ENCODE measurements at regions of chr2 and their contacts with region 1.

Region 1: DNA sequence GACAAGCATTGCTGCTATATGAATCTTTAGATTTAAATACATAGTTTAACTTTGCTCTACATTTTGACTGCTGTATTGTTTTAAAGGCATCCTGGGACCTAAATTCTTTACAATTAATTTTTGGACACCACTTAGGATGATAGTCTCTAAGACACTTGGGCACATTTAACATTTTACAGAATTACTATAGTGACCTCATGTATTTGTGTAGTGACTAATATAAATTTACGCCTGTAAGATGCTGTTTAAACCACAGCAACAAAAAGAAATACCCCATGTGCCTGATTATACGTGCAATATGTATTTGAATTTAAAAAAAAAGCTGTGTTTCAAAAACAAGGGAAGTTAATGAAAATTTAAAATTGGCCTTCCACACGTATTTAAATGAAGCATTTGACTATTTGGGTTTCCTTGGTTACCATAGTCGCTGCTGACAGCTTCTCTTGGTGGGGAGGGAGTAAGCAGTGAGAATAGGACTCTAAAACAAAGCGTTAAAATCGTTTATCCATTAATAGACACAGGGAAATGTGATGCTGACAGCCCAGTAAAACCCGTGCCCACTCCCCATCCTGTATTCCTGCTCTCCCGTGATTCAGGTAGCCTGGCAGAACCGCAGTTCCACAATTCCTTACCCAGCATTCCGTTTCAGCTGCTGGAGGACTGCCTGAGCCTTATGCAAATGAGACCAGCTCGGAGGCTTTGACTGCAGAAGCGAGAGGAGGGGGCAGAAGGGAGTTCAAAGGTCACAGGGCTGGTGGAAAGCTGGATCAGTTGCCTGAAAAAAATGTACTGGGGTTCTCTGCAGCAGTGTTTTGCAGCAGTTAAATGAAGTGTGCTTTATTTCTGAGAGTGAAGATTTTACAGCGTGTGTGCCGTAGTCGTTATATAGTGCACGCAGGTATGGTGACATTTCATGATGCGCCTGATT is 104.3 kb downstream of the CSRNP3 start:
- DNase-seq: peak; percentile 53 to 93 (median 64)

Region 2: GRCh38 chr2:165469417-165469816 is 104.4 kb before region 1 on chr2 and contains the start of gene CSRNP3:
- intact Hi-C with region 1: loop called (anchors 5 kb)
- DNase-seq: peak; percentile 53 to 95 (median 70)

Region 3: GRCh38 chr2:165645930-165646831 is 72.4 kb after region 1 on chr2:
- intact Hi-C with region 1: loop called (anchors 5 kb)
- DNase-seq: no peak

Region 4: DNA sequence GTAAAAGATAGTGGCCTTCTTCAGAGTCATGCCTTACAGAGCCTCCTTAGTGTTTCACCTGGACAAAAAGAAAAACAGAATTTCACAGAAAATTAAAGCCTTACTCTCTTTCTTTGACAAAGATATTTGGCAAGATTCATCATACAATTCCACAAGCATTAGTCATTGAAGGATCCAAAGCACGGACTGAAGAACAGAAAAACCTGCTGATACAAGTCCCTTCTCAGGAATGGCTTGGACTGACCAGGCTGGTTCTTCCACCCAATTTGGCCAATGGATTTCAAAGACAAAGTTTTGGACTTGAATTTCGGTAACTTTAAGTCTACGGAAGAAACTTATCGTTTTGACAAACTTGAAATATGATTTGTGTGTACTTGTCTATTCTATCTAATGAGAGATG is 259.4 kb after region 1 on chr2:
- intact Hi-C with region 1: no loop called
- DNase-seq: no peak